Left cardiac atrium (tissue), 4 donors: ENCODE measurements at regions of chr1 and their contacts with region 1.

Region 1: GRCh38 chr1:205658943-205659581 is 21.2 kb downstream of the SLC45A3 start:
- DNase-seq: peak; percentile 86
- ATAC-seq: peak; percentile 81

Region 2: GRCh38 chr1:205528887-205529825 is 129.9 kb before region 1 on chr1:
- intact Hi-C with region 1: loop called (anchors 5 to 10 kb)
- DNase-seq: peak; percentile 85
- ATAC-seq: peak; percentile 71 to 76

Region 3: DNA sequence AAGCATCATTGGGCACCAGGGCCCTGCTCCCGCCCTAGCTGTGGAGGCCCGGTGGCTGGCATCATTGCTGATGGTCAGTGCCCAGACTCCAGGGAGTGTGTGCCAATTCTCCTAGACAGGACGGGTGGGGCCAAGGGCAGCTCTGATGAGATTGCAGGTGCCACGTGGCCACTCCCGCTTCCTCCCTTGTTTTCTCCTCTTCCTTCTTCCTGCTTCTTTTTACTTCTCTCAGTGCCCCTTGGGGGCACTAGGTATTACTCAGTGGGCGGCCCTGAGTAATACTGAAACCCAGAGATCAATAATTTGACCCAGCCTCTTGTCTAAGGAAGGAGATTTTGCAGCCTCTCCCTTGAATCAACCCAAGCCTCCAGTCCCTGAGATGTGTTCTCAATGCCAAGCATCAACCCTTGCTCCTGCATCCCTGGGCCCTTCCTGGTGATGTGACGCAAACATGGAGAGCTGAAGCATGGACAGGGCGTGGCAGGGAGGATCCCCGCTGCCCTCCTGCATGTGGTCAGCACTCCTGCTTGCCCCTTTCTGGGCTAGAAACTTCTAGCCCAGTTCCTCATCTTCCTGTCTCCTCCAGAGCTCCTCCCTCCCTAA is 122.2 kb before region 1 on chr1:
- intact Hi-C with region 1: loop called in 1 of 2 experiments (anchors 10 kb)
- DNase-seq: no peak
- ATAC-seq: peak; percentile 72 to 79

Region 4: GRCh38 chr1:205591522-205592351 is 67.3 kb before region 1 on chr1:
- intact Hi-C with region 1: loop called (anchors 1 to 2 kb)
- DNase-seq: peak; percentile 88
- ATAC-seq: peak; percentile 94 to 96

Region 5: DNA sequence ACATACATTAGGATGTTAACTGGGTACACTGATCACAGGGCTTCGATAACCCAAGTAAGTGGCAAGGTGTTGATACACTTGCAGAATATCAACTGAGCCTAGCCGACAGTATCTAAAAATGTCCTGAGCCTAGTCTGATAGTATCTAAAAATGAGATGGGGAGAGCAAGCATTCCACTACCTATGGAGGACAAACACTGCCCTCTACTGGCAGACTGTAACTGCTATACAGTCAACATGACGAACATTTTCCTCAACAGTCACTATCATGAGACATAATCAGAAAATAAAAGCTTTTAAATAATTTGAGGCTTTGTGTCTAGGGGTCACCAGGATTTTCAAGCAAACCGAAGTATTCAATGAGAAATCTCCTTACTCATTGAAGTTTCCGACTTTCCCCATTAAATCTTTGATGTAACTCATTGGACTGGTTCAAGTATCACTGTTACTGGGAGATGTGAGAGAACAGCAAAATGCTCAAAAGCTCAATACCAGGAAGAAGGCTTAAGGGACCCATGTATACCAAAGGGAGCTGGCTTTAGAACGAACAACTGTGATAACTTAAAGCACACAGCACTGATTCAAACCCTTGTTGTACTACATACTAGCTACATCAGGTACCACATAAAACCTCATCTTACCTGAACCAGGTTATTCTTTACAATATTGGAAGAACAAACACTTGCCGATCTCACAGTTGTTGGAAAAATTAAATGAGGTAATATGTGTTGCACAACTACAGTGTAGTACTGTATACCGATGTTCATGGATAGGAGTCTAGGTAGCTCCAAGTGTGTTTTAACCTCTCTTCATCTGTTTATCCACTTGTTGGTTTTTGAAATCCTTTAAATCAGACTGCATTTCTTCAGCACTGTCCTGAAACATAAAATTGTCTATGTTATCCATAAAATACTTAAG is 52.3 kb after region 1 on chr1:
- intact Hi-C with region 1: loop called (anchors 1 to 10 kb)
- DNase-seq: peak; percentile 56
- ATAC-seq: peak; percentile 80 to 83